Heart left ventricle (tissue), 16 donors: ENCODE measurements at regions of chr7 and their contacts with region 1.

Region 1: GRCh38 chr7:142782922-142783900 is 12.4 kb downstream of the PRSS2 start:
- DNase-seq: peak; percentile 81 to 88 (median 86)
- ATAC-seq: peak; percentile 79 to 95 (median 88)
- H3K4me3 ChIP-seq: peak overlapping the region; percentile 7 to 53 (median 38)
- H3K27ac ChIP-seq: no peak overlapping the region
- H3K4me1 ChIP-seq: peaks cover 0 to 4% (median 0%) of the 10 kb centered on the region in 12 donors
- H3K27me3 ChIP-seq: peaks cover 0 to 16% (median 0%) of the 10 kb centered on the region in 9 donors
- CTCF ChIP-seq: peak; percentile 75 to 96 (median 88)
- POLR2A ChIP-seq: peak in 1 of 2 donors; percentile 19

Region 2: GRCh38 chr7:142500364-142500763 is 282.8 kb before region 1 on chr7:
- intact Hi-C with region 1: no loop called
- DNase-seq: no peak
- ATAC-seq: no peak
- H3K4me3 ChIP-seq: no peak overlapping the region
- H3K27ac ChIP-seq: no peak overlapping the region
- H3K4me1 ChIP-seq: peaks cover 0 to 15% (median 0%) of the 10 kb centered on the region in 12 donors
- H3K27me3 ChIP-seq: peaks cover 0 to 25% (median 6%) of the 10 kb centered on the region in 9 donors
- CTCF ChIP-seq: no peak
- POLR2A ChIP-seq: no peak

Region 3: GRCh38 chr7:142603870-142604448 is 179.3 kb before region 1 on chr7:
- intact Hi-C with region 1: loop called in 1 of 10 experiments (anchors 10 kb)
- DNase-seq: no peak
- ATAC-seq: no peak
- H3K4me3 ChIP-seq: no peak overlapping the region
- H3K27ac ChIP-seq: no peak overlapping the region
- H3K4me1 ChIP-seq: no peaks in the 10 kb centered on the region
- H3K27me3 ChIP-seq: peaks cover 0 to 40% (median 5%) of the 10 kb centered on the region in 9 donors
- CTCF ChIP-seq: peak; percentile 66 to 83 (median 72)
- POLR2A ChIP-seq: no peak

Region 4: GRCh38 chr7:142632291-142633134 is 150.7 kb before region 1 on chr7:
- intact Hi-C with region 1: loop called (anchors 2 to 10 kb)
- DNase-seq: peak; percentile 18 to 65 (median 31)
- ATAC-seq: peak; percentile 42 to 73 (median 57)
- H3K4me3 ChIP-seq: no peak overlapping the region
- H3K27ac ChIP-seq: no peak overlapping the region
- H3K4me1 ChIP-seq: no peaks in the 10 kb centered on the region
- H3K27me3 ChIP-seq: peaks cover 0 to 40% (median 2%) of the 10 kb centered on the region in 9 donors
- CTCF ChIP-seq: peak; percentile 64 to 80 (median 74)
- POLR2A ChIP-seq: no peak

Region 5: DNA sequence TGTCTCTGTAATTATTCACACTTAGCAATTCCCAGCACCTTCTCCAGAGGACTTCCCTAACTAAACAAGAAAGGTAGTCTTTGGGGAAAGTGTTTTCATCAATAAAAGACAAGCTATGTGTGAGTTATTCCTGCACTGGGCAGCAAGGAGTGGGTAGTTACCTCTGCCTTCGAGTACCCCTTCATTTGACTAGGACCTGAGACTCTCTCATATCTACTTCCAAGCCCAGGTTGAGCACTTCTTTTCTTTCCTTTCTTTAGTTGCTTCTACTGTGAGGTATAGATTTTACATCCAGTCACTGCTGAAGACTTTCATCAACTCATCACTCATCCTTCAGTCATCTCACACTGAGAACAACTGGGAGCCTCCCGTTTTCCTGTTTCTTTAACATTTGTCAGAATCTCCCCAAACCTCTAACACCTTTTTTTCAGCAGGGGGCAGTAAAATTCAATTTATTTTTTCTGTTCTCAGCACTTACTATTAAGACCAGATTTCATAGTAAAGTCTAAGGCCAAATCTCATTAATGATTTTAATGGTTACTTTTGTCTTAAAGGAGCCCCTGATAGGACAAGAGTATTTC is 114.0 kb before region 1 on chr7:
- intact Hi-C with region 1: loop called in 5 of 10 experiments (anchors 1 to 10 kb)
- DNase-seq: no peak
- ATAC-seq: no peak
- H3K4me3 ChIP-seq: no peak overlapping the region
- H3K27ac ChIP-seq: no peak overlapping the region
- H3K4me1 ChIP-seq: no peaks in the 10 kb centered on the region
- H3K27me3 ChIP-seq: no peaks in the 10 kb centered on the region
- CTCF ChIP-seq: peak in 8 of 12 donors; percentile 25 to 44 (median 37)
- POLR2A ChIP-seq: no peak

Region 6: DNA sequence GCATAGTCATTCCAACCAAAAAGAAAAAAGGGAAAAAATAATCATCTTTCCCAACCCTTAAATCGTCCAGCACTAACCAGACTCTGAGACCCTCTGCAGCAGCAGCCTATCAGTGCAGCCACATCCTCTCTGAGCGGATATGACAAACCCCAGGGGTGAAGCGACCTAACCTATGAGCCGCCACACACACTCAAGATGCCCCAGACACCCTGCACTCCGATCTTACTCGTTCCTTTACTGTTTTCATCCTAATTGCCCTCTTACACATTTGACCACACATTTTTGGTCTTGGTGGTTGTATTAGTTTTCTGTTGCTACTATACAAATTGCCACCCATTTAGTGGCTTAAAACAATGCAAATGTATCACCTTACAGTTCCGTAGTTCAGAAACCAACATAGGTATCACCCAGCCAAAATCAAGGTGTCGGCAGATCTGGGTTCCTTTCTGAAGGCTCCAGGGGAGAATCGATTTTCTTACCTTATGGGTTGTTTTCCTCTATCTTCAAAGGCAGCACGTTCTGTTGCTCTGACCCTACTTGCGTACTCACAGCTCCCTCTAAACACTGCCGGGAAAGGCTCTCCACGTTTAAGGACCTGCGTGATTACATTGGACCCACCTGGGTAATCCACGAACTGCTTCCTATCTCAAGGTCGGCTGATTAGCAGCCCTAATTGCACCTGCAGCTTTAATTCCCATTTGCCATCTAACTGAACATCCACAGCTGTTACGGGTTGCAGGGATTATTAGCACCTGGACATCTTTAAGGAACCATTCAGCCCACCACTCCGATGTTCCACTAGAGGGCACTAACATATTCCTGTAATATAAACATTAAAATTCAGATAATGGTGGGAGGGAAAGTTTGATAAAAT is 71.2 kb before region 1 on chr7:
- intact Hi-C with region 1: loop called (anchors 1 to 5 kb)
- DNase-seq: no peak
- ATAC-seq: peak in 1 of 4 donors; percentile 26
- H3K4me3 ChIP-seq: no peak overlapping the region
- H3K27ac ChIP-seq: peak overlapping the region in 1 of 12 donors; percentile 49
- H3K4me1 ChIP-seq: no peaks in the 10 kb centered on the region
- H3K27me3 ChIP-seq: peaks cover 0 to 4% (median 0%) of the 10 kb centered on the region in 9 donors
- CTCF ChIP-seq: peak; percentile 30 to 67 (median 57)
- POLR2A ChIP-seq: no peak